SK-N-SH (cell line): ENCODE measurements at regions of chr5 and their contacts with region 1.

Region 1: DNA sequence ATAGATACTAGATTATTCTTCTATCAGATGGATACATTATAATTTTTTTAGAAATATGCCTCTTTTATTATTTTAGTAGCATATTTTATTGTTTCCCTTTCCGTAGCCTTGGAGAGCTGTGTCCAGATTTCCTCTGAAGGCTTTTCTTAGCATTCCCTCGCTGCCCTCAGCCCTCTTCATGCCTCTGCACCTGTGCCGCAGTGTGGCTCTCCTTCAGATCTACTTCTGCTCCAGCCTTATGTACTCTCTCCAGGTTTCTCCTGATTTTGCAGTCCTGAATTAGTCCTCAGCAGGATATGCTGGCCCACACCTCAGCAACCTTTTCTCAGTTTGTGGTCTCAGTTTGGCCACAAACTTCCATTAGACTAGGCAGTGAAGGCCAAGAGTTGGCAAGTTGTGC is 1052.0 kb downstream of the TAF11L14 start:
- DNase-seq: no peak
- H3K4me3 ChIP-seq: no peak overlapping the region
- H3K27ac ChIP-seq: no peak overlapping the region
- H3K4me1 ChIP-seq: no peaks in the 10 kb centered on the region
- H3K27me3 ChIP-seq: peaks cover 5% of the 10 kb centered on the region; the same call in 1 of the 2 replicates
- CTCF ChIP-seq: no peak
- EP300 ChIP-seq: no peak
- RAD21 ChIP-seq: no peak

Region 2: GRCh38 chr5:18699681-18700080 is 13.4 kb after region 1 on chr5:
- CTCF ChIA-PET with region 1: interaction called, 13 read pairs
- POLR2A ChIA-PET with region 1: no interaction called
- DNase-seq: no peak
- H3K4me3 ChIP-seq: no peak overlapping the region
- H3K27ac ChIP-seq: no peak overlapping the region
- H3K4me1 ChIP-seq: peaks cover 0 to 3% of the 10 kb centered on the region in 2 experiments; a peak in 1 of 4 replicates
- H3K27me3 ChIP-seq: no peaks in the 10 kb centered on the region
- CTCF ChIP-seq: no peak
- EP300 ChIP-seq: no peak
- RAD21 ChIP-seq: no peak

Region 3: DNA sequence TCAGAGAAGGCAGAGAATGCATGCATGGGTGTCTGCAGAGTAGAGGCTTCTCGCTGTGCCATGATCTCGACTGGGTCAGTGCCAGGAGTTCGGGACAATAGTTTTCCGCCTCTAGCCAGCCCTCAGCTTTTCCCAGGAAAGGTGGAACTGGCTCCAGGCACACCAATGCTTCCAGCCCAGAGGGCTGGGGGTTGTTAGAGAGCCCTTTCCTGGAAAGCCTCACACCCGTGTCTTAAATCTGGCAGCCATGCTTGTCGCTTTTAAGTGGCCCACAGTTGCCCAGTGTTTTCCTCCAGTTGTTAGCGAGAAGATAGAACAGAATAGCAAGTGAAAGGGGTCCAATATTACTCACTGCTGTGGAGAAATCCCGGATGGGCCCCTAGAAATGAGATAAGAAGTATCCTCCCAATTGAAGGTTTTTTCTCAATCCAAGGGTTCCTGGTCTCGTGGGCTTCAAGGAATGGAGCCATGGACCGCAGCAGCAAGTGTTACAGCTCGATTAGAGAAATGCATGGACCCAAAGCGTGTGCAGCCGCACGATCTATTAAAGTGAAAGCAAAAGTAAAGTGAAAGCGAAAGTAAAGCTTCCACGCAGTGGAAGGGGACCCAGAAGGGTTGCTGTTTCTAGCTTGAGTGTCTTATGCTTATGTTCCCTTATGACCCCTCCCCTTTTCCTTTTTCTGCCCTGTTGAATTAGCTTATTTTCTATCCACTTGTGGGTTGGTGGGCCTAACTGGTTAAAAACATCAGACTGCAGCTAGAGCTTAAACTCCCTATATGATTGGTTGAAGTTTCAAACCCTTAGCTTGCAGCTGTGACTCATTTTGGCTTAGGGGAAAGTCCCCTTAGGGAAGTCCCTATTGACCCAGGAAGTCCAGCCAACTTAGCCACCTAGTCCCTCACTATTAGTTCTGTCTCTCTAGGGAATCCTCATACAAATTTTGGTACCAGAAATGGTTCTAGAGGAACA is 59.7 kb after region 1 on chr5:
- CTCF ChIA-PET with region 1: no interaction called
- POLR2A ChIA-PET with region 1: no interaction called
- DNase-seq: peak; percentile 11
- H3K4me3 ChIP-seq: peak overlapping the region; percentile 55 to 71
- H3K27ac ChIP-seq: peak overlapping the region; percentile 60 to 64
- H3K4me1 ChIP-seq: no peaks in the 10 kb centered on the region; a peak in 1 of 4 replicates
- H3K27me3 ChIP-seq: no peaks in the 10 kb centered on the region
- CTCF ChIP-seq: no peak
- EP300 ChIP-seq: no peak
- RAD21 ChIP-seq: no peak

Region 4: DNA sequence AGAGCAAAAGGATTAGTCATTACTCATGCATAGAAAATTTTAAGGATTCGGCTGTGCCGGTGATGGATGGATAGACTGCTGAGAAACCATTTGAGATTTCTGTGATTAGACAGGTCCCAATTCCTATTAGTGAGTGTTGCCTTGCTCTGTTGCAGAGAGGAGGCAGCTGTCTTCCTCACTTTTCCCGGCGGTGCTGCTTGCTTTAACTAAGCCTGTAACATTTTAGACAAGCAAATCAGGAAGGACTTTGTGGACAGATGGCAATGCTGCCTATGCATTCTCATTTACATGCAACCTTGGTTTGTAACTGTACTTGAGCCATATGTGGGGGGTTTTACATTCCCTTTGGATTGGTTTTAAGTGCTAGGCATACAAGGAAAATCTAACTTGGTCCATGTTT is 125.4 kb after region 1 on chr5:
- CTCF ChIA-PET with region 1: no interaction called
- POLR2A ChIA-PET with region 1: no interaction called
- DNase-seq: no peak
- H3K4me3 ChIP-seq: no peak overlapping the region
- H3K27ac ChIP-seq: no peak overlapping the region
- H3K4me1 ChIP-seq: no peaks in the 10 kb centered on the region
- H3K27me3 ChIP-seq: no peaks in the 10 kb centered on the region
- CTCF ChIP-seq: no peak
- EP300 ChIP-seq: no peak
- RAD21 ChIP-seq: no peak